ENCODE measurements at regions of chr16 and their contacts with region 1.

Region 1: GRCh38 chr16:84952335-84953189 is 58.8 kb downstream of the ZDHHC7 start:
- DNase-seq: peak; percentile 81 to 94 (median 87)
- H3K4me3 ChIP-seq: no peak overlapping the region
- H3K27ac ChIP-seq: peak overlapping the region in 4 of 5 donors; percentile 13 to 70 (median 58)
- H3K4me1 ChIP-seq: peaks cover 13 to 21% of the 10 kb centered on the region in 2 donors
- H3K27me3 ChIP-seq: no peaks in the 10 kb centered on the region
- CTCF ChIP-seq: peak; percentile 87 to 96 (median 93)
- POLR2A ChIP-seq: no peak

Region 2: GRCh38 chr16:84754353-84754856 is 198.2 kb before region 1 on chr16:
- intact Hi-C with region 1: loop called in 1 of 2 experiments (anchors 10 kb)
- DNase-seq: peak; percentile 69 to 91 (median 79)
- H3K4me3 ChIP-seq: no peak overlapping the region
- H3K27ac ChIP-seq: peak overlapping the region in 3 of 5 donors; percentile 10 to 48 (median 37)
- H3K4me1 ChIP-seq: peaks cover 14 to 52% of the 10 kb centered on the region in 2 donors
- H3K27me3 ChIP-seq: no peaks in the 10 kb centered on the region
- CTCF ChIP-seq: peak; percentile 70 to 94 (median 88)
- POLR2A ChIP-seq: no peak

Region 3: DNA sequence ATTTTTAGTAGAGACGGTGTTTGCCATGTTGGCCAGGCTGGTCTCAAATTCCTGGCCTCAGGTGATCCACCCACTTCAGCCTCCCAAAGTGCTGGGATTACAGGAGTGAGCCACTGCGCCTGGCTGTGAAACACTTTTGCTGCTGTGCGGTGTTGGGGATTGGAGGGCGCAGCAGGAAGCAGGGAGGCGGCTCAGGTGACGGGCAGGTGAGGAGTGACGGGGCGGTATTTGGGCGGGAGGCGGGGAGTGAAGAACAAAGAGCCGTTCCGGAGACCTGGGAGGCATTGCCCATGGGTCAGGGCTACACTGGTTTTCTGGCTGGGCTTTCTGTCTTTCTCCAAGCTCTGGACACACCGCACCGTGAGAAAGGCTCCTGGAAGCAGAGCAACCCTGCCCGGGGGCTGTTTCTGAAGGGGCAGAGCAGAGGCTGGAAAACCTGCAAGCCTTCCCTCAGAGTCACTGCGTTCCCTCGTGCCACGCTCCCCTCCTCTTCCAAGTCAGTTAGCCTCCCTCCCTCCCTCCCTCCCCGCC is 110.7 kb before region 1 on chr16:
- intact Hi-C with region 1: loop called in 1 of 2 experiments (anchors 10 kb)
- DNase-seq: no peak
- H3K4me3 ChIP-seq: no peak overlapping the region
- H3K27ac ChIP-seq: peak overlapping the region in 1 of 5 donors; percentile 55
- H3K4me1 ChIP-seq: no peaks in the 10 kb centered on the region
- H3K27me3 ChIP-seq: no peaks in the 10 kb centered on the region
- CTCF ChIP-seq: no peak
- POLR2A ChIP-seq: no peak

Region 4: DNA sequence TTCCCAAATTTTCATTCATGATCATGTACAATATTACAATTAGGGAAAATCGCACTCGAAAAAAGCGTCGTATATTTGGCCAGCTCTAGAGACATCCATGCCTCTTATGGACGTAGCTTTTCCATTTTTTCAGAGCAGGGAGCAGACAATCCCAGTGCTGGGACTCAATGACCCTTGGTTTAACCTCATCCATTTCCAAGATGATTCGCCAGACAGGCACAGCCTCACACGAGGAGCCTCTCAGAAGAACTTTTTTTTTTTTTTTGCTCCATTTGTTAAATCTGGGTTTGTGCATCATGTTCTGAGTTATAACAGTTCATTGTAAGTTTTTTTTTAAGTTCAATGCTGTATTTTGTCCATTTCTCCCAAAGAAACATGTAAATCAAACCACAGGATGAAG is 33.3 kb before region 1 on chr16:
- intact Hi-C with region 1: loop called in 1 of 2 experiments (anchors 5 kb)
- DNase-seq: no peak
- H3K4me3 ChIP-seq: no peak overlapping the region
- H3K27ac ChIP-seq: peak overlapping the region in 2 of 5 donors; percentile 51 to 86
- H3K4me1 ChIP-seq: peaks cover 0 to 19% of the 10 kb centered on the region in 2 donors
- H3K27me3 ChIP-seq: no peaks in the 10 kb centered on the region
- CTCF ChIP-seq: no peak
- POLR2A ChIP-seq: no peak

Measured in adrenal gland (tissue), 19 donors.